Astrocyte of the cerebellum (primary cell): ENCODE measurements at regions of chr11 and their contacts with region 1.

Region 1: GRCh38 chr11:30322826-30323710 is at the start of gene ARL14EP:
- DNase-seq: peak; percentile 91
- H3K4me3 ChIP-seq: peak within 1 kb of the TSS; percentile 80
- CTCF ChIP-seq: no peak

Region 2: DNA sequence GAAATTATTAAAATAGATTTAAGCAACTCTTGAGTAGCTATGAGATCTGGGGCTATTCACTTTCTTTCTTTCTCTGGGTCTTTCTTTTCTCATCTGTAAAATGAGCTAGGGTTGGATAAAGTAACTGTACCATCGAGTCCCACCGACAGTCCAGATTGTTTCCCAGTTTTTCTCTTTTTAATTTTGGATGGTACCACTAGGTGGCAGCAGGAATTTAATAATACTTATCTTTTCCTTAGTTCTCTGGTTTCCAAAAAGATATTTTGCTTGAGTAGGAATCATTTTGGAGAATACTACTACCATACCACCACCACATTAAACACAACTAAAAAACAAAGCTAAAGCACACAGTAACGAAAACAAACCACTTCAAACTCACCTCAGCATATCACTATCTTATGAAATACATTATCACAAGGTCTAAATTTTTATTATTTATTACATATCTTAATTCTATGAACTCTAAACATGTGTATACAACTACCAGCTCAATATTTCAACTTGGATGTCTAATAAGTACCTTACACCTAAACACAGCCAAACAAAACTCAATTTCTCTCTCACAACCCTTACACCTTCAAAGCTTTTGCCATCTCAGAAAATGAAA is 890.2 kb before region 1 on chr11:
- in situ Hi-C with region 1: loop called (anchors 25 kb)
- DNase-seq: no peak
- H3K4me3 ChIP-seq: no peak overlapping the region
- CTCF ChIP-seq: peak; percentile 36

Region 3: GRCh38 chr11:30488304-30488998 is 165.4 kb after region 1 on chr11:
- in situ Hi-C with region 1: no loop called
- DNase-seq: peak; percentile 34
- H3K4me3 ChIP-seq: no peak overlapping the region
- CTCF ChIP-seq: no peak